ENCODE measurements at regions of chr17 and their contacts with region 1.

Region 1: DNA sequence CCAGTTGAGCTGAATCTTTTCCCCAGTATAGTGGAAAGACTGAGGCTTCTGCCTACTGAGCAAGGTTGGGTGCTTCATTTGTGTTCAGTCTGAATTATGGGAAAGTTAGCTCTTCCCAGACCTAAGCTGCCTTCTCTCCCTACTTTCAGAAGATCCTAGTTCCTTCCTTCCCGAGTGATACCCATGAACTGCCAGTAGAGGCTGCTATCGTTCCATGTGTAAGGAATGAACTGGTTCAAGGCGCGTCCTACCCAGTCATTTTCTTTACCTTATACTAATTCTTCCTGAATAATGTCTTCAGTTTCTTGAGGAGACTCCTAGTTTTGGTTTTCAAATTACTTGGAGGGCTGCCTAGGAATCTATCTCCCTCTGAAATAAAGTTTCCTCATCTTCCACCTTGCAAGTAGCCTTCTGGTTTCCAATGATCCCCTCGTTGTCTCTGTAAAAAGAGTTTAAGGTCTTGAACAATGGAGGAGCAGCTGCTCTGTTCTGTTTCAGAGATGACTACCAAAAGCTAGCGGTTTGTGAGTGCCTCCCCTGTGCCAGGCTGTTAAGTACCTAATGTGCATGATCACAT is 934 bp upstream of the AOC2 start:
- DNase-seq: no peak
- H3K4me3 ChIP-seq: no peak overlapping the region
- H3K27ac ChIP-seq: no peak overlapping the region
- H3K4me1 ChIP-seq: no peaks in the 10 kb centered on the region
- H3K27me3 ChIP-seq: no peaks in the 10 kb centered on the region
- CTCF ChIP-seq: peak; percentile 46 to 97 (median 90)
- EP300 ChIP-seq: no peak
- POLR2A ChIP-seq: no peak
- RAD21 ChIP-seq: peak; percentile 98 to 99

Region 2: DNA sequence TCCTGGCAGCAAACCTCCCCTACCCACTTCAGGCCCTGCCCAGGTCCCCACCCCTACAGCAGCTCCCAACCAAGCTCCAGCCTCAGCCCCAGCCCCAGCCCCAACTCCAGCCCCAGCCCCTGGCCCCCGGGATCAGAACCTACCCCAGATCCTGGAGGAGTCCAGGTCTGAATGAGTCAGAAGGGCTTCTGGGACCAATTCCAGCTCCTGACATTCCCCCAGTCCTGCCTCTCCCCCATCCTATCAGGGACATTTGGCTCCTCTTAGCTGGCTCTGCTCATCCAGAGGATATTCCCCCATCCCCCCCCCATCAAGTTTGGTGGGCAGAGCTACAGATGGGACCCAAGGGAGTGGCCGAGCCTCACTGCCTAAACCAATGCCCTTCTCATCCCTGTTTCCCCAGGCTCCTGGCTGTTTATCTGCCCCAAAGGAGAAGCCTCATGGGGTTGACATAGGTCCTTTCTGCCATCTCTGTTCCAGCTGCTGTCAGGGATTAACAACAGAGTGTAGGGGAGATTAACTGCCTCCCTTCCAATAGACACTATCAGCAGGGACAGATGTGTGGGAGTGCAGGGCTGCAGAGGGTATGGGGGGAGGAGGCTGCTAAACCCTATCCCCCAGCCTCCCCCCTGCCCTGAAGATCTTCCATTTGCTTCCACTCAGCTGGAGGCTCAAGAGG is 144.6 kb before region 1 on chr17:
- CTCF ChIA-PET with region 1: no interaction called
- POLR2A ChIA-PET with region 1: no interaction called
- DNase-seq: no peak
- H3K4me3 ChIP-seq: no peak overlapping the region
- H3K27ac ChIP-seq: no peak overlapping the region
- H3K4me1 ChIP-seq: 0 out of 7 replicates have a peak, but pooled peaks cover 0 to 2% (median 0%) of the 10 kb centered on the region in 4 experiments
- H3K27me3 ChIP-seq: no peaks in the 10 kb centered on the region
- CTCF ChIP-seq: no peak
- EP300 ChIP-seq: no peak
- POLR2A ChIP-seq: no peak
- RAD21 ChIP-seq: no peak

Region 3: DNA sequence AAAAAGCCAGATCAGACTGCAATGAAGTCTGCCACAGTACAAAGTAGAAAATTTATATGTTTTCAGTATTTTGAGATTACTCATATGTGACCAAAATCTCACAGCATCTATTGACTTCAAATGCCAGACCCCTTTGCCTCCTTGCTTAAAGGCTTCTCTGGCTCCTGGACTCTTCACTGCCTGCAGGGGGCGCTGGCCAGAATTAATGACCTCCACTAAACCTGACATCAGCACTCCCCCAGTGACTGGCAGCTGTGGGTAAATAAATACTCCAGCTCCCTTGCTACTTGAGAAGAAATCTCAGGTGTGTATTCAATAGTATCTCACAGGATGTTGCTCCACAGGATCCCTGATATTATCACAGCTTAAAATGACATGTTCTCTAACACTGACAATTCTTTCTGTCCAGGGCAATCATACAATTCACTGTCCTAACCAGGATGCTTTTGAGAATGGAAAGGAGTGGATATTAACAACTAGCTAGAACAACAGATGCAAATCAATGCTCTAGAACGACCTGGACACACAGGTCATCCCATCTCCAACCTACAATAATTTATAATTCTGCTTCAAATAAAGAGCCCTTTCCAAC is 23.4 kb before region 1 on chr17:
- CTCF ChIA-PET with region 1: interaction called, 12 read pairs
- POLR2A ChIA-PET with region 1: interaction called, 69 read pairs
- DNase-seq: peak in 1 of 2 experiments; percentile 77
- H3K4me3 ChIP-seq: no peak overlapping the region
- H3K27ac ChIP-seq: no peak overlapping the region
- H3K4me1 ChIP-seq: no peaks in the 10 kb centered on the region; a peak in 1 of 7 replicates
- H3K27me3 ChIP-seq: no peaks in the 10 kb centered on the region
- CTCF ChIP-seq: peak; percentile 76 to 83 (median 78)
- EP300 ChIP-seq: no peak
- POLR2A ChIP-seq: no peak
- RAD21 ChIP-seq: peak; percentile 33 to 59

Region 4: GRCh38 chr17:42855048-42855596 is 11.7 kb after region 1 on chr17:
- CTCF ChIA-PET with region 1: interaction called, 55 read pairs
- POLR2A ChIA-PET with region 1: interaction called, 111 read pairs
- DNase-seq: no peak
- H3K4me3 ChIP-seq: no peak overlapping the region
- H3K27ac ChIP-seq: no peak overlapping the region
- H3K4me1 ChIP-seq: no peaks in the 10 kb centered on the region
- H3K27me3 ChIP-seq: no peaks in the 10 kb centered on the region
- CTCF ChIP-seq: no peak
- EP300 ChIP-seq: no peak
- POLR2A ChIP-seq: no peak
- RAD21 ChIP-seq: no peak

Region 5: DNA sequence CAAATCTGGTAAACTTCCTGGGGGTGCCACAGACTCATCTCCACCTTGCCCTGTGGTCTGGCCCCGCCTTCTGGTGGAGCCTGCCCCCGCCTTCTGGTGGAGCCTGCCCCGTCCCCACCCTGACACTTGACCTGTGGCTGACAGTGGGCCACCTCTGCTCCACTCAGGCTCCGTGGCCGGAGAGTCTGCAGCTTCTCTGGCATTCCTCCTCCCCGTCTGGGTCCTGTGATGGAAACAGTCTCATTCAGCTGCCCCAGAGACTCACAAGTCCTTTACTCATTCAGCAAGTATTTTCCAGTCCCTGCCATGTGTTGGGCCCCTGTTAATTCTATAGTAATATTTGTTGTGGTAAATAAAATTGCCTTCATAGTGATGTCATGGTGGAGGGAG is 36.1 kb after region 1 on chr17:
- CTCF ChIA-PET with region 1: interaction called, 11 read pairs
- POLR2A ChIA-PET with region 1: interaction called, 4 read pairs
- DNase-seq: no peak
- H3K4me3 ChIP-seq: no peak overlapping the region
- H3K27ac ChIP-seq: no peak overlapping the region
- H3K4me1 ChIP-seq: peaks cover 0 to 8% (median 5%) of the 10 kb centered on the region in 4 experiments; a peak in 4 of 7 replicates
- H3K27me3 ChIP-seq: peaks cover 0 to 5% (median 0%) of the 10 kb centered on the region in 4 experiments; a peak in 4 of 7 replicates
- CTCF ChIP-seq: no peak
- EP300 ChIP-seq: no peak
- POLR2A ChIP-seq: no peak
- RAD21 ChIP-seq: no peak

Region 6: GRCh38 chr17:42920922-42921321 is 77.5 kb after region 1 on chr17:
- CTCF ChIA-PET with region 1: interaction called, 10 read pairs
- POLR2A ChIA-PET with region 1: interaction called, 5 read pairs
- DNase-seq: no peak
- H3K4me3 ChIP-seq: no peak overlapping the region
- H3K27ac ChIP-seq: no peak overlapping the region
- H3K4me1 ChIP-seq: peaks cover 0 to 12% (median 0%) of the 10 kb centered on the region in 4 experiments; a peak in 2 of 7 replicates
- H3K27me3 ChIP-seq: no peaks in the 10 kb centered on the region
- CTCF ChIP-seq: no peak
- EP300 ChIP-seq: no peak
- POLR2A ChIP-seq: no peak
- RAD21 ChIP-seq: no peak

Region 7: GRCh38 chr17:42937712-42938596 is 94.5 kb after region 1 on chr17:
- CTCF ChIA-PET with region 1: interaction called, 141 read pairs
- POLR2A ChIA-PET with region 1: interaction called, 73 read pairs
- DNase-seq: peak; percentile 25 to 55
- H3K4me3 ChIP-seq: no peak overlapping the region
- H3K27ac ChIP-seq: no peak overlapping the region
- H3K4me1 ChIP-seq: no peaks in the 10 kb centered on the region
- H3K27me3 ChIP-seq: no peaks in the 10 kb centered on the region
- CTCF ChIP-seq: peak; percentile 47 to 87 (median 85)
- EP300 ChIP-seq: no peak
- POLR2A ChIP-seq: no peak
- RAD21 ChIP-seq: peak; percentile 96